H1 (cell line): ENCODE measurements at regions of chr1 and their contacts with region 1.

Region 1: GRCh38 chr1:16078925-16079656 is 5.6 kb upstream of the FAM131C start:
- DNase-seq: peak; percentile 62 to 92
- H3K4me3 ChIP-seq: no peak overlapping the region
- H3K27ac ChIP-seq: no peak overlapping the region
- H3K4me1 ChIP-seq: peaks cover 0 to 9% (median 4%) of the 10 kb centered on the region in 4 experiments; a peak in 5 of 7 replicates
- H3K27me3 ChIP-seq: peaks cover under 1 to 17% (median 13%) of the 10 kb centered on the region in 4 experiments
- CTCF ChIP-seq: peak; percentile 94 to 99 (median 97)
- EP300 ChIP-seq: no peak; a peak in 1 of 3 replicates
- POLR2A ChIP-seq: no peak
- RAD21 ChIP-seq: peak; percentile 98 to 99

Region 2: DNA sequence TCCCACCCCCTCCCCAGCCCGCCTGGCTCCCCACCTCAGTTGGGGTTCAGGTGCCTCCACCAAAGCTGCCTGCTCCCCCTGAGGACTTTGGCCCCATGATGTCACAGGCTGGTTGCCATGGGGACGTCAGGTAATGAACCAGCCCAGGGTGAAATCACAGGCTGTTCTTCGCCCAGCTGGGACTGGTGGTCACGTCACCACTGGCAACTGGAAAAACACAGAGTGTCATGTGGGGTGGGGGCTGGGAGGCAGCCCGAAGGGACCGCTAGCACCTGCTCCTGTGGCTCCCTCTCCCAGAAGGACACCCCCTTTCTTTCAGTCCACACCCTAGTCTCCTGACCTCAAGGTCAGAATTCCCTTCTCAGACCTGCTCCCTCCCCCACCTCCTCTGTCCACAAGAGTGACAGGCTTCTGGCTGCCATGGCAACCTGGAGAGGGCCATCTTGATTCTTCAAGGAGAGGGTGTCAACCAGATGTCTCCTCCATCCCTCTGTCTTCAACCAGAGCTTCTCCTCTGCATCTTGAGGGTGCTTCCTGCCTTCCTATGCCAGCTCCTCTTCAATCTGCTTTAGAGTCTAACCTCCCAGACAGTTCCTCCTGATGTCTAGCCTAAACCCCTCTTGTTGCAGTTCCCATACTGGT is 11.8 kb before region 1 on chr1:
- CTCF ChIA-PET with region 1: interaction called, 91 read pairs
- POLR2A ChIA-PET with region 1: interaction called, 3 read pairs
- DNase-seq: no peak
- H3K4me3 ChIP-seq: no peak overlapping the region
- H3K27ac ChIP-seq: no peak overlapping the region
- H3K4me1 ChIP-seq: peaks cover 0 to 21% (median 13%) of the 10 kb centered on the region in 4 experiments; a peak in 6 of 7 replicates
- H3K27me3 ChIP-seq: peaks cover 0 to 8% (median 4%) of the 10 kb centered on the region in 4 experiments; a peak in 5 of 7 replicates
- CTCF ChIP-seq: no peak
- EP300 ChIP-seq: no peak
- POLR2A ChIP-seq: no peak
- RAD21 ChIP-seq: no peak

Region 3: DNA sequence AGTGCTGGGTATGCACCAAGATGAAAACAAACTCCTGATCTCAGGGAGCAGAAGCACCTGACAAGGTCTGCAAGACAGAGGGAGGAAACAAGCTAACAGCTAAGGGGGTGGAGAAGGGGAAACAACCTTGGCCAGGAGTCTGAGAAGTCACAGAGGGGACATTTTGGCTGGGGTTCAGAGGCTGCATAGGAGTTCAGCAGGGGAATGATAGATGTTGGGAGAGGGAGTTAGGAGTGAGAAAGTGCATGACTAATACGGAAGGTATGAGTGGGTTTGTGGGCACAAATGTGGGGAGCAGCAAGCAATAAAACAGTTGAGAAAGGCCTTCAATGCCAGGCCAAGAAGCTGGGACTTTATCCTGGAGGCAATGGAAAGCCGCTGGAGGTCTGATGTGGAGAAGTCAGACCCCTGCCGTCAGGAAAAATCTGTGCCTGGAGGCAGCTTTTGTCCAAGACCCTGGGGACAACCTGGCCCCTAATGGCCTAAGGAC is 60.4 kb after region 1 on chr1:
- CTCF ChIA-PET with region 1: interaction called, 202 read pairs
- POLR2A ChIA-PET with region 1: no interaction called
- DNase-seq: no peak
- H3K4me3 ChIP-seq: no peak overlapping the region
- H3K27ac ChIP-seq: no peak overlapping the region; the same call in 1 of the 2 replicates
- H3K4me1 ChIP-seq: peaks cover 0 to 25% (median 13%) of the 10 kb centered on the region in 4 experiments; a peak in 6 of 7 replicates
- H3K27me3 ChIP-seq: no peaks in the 10 kb centered on the region
- CTCF ChIP-seq: no peak
- EP300 ChIP-seq: no peak
- POLR2A ChIP-seq: no peak
- RAD21 ChIP-seq: no peak

Region 4: GRCh38 chr1:16155532-16156410 is 76.7 kb after region 1 on chr1 and contains the start of gene EPHA2:
- CTCF ChIA-PET with region 1: interaction called, 202 read pairs
- POLR2A ChIA-PET with region 1: interaction called, 10 read pairs
- DNase-seq: peak; percentile 75 to 96
- H3K4me3 ChIP-seq: peak within 1 kb of the TSS; percentile 70 to 87 (median 81)
- H3K27ac ChIP-seq: peak within 1 kb of the TSS; percentile 53; the same call in 1 of the 2 replicates
- H3K4me1 ChIP-seq: peaks cover 5 to 41% (median 30%) of the 10 kb centered on the region in 4 experiments
- H3K27me3 ChIP-seq: peaks cover 0 to 10% (median 6%) of the 10 kb centered on the region in 4 experiments; a peak in 4 of 7 replicates
- CTCF ChIP-seq: no peak
- EP300 ChIP-seq: peak in 1 of 2 experiments; percentile 68; a peak in 1 of 3 replicates
- POLR2A ChIP-seq: peak in 1 of 2 experiments; percentile 95; a peak in 2 of 3 replicates
- RAD21 ChIP-seq: 0 out of 4 replicates have a peak, but pooled peaks of 1 of the 2 experiments have one; percentile 1
- total RNA-seq, gene EPHA2: 28.4 and 33.6 TPM in 2 replicates

Region 5: DNA sequence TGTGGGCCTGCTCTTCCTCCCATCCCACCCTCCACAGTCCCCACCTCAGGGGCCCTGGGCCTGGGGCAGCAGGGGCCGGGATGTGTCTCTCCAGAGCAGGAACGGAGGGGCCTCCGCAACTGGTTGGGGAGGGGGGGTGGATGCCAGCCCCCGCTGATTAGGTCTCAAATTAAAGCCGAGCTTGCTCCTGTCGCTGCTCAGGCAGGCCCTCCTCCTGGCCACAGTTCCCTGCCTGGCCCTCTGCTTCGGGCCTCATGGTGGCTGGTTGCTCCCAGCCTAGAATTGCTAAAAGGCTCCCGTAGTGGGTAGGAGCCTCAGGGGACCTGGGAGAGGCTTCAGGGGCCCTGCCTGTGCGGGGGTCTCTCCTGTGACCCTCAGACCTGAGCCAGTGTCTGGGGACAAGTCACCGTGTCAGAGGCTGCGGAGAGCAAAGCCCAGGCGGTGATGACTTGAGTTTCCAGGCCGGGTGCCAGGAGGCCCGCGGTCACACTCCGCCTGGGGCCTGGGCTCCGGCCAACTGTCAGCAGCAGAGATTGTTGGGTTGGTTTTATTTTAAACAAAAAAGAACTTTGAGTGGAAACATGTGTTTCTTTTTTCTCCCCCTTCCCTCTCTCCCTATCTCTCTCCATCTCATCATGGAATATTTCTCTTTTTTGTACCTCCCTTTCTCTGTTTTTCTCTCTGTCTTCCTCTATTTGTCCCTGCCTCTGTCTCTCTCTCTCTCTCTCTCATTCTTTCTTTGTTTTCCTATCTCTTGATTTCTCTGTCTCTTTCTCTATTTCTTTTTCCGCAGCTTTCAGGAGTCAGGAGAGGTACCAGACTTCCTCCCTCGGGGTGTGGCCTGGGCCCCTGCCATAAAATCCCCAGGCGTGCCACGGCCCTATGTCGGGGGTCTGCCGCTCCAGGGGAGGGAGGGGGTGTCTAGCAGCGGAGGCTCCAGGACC is 96.8 kb after region 1 on chr1:
- CTCF ChIA-PET with region 1: interaction called, 569 read pairs
- POLR2A ChIA-PET with region 1: interaction called, 5 read pairs
- DNase-seq: no peak
- H3K4me3 ChIP-seq: no peak overlapping the region
- H3K27ac ChIP-seq: no peak overlapping the region
- H3K4me1 ChIP-seq: peaks cover 0 to 18% (median 8%) of the 10 kb centered on the region in 4 experiments; a peak in 6 of 7 replicates
- H3K27me3 ChIP-seq: no peaks in the 10 kb centered on the region; a peak in 1 of 7 replicates
- CTCF ChIP-seq: no peak
- EP300 ChIP-seq: no peak
- POLR2A ChIP-seq: no peak
- RAD21 ChIP-seq: no peak

Region 6: GRCh38 chr1:16206547-16207317 is 127.6 kb after region 1 on chr1:
- CTCF ChIA-PET with region 1: interaction called, 17 read pairs
- POLR2A ChIA-PET with region 1: interaction called, 3 read pairs
- DNase-seq: peak; percentile 96 to 97
- H3K4me3 ChIP-seq: peak overlapping the region; percentile 50 to 67 (median 58)
- H3K27ac ChIP-seq: peak overlapping the region; percentile 56; the same call in 1 of the 2 replicates
- H3K4me1 ChIP-seq: peaks cover 4 to 33% (median 20%) of the 10 kb centered on the region in 4 experiments
- H3K27me3 ChIP-seq: no peaks in the 10 kb centered on the region
- CTCF ChIP-seq: no peak
- EP300 ChIP-seq: no peak
- POLR2A ChIP-seq: peak; percentile 68 to 79; a peak in 2 of 3 replicates
- RAD21 ChIP-seq: no peak

Region 7: DNA sequence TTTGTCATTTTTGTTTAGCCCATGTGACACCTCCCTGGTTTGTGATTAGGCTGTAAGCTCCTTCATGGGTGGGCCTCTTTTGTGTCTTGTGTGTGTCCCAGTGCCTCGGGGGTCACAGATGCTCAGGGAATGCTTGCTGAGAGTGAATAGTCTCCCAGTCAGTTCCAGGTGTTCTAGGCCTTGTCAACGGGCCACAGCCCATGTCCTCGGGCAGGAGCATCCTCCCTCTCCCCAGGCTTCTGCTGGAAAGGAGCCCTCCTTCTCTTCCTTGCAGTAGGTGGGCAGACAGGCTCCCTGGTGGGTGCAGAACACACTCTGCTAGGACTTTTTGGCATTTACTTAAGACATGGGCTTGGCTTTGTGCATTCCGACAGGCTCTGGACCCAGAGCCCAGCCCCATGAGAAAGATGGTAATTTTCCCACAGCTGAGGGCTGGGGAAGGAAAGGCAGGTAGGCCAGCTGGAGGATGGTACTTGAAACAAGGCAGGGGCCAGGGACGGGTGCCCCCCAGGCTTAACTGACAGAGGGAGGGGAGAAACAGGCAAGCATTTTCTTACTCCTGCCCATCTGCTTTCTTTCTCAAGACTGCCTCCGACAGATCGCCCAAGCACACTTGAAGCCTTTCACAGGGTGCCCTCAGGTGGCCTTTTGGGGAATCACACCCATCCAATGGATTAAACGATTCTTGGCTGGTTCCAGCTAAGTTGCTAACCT is 165.0 kb after region 1 on chr1:
- CTCF ChIA-PET with region 1: interaction called, 96 read pairs
- POLR2A ChIA-PET with region 1: no interaction called
- DNase-seq: peak; percentile 51 to 90
- H3K4me3 ChIP-seq: no peak overlapping the region
- H3K27ac ChIP-seq: no peak overlapping the region
- H3K4me1 ChIP-seq: peaks cover 0 to 3% (median 0%) of the 10 kb centered on the region in 4 experiments; a peak in 1 of 7 replicates
- H3K27me3 ChIP-seq: no peaks in the 10 kb centered on the region
- CTCF ChIP-seq: peak; percentile 75 to 93 (median 89)
- EP300 ChIP-seq: no peak
- POLR2A ChIP-seq: no peak; a peak in 1 of 3 replicates
- RAD21 ChIP-seq: peak; percentile 95 to 96